Breast epithelium (tissue), 4 donors: ENCODE measurements at regions of chrX and their contacts with region 1.

Region 1: GRCh38 chrX:66050140-66050569 is 10.3 kb upstream of the VSIG4 start:
- DNase-seq: peak in 1 of 2 donors; percentile 20
- H3K4me3 ChIP-seq: no peak overlapping the region
- H3K27ac ChIP-seq: no peak overlapping the region
- H3K4me1 ChIP-seq: no peaks in the 10 kb centered on the region
- H3K27me3 ChIP-seq: peaks cover 0 to 31% of the 10 kb centered on the region in 2 donors
- CTCF ChIP-seq: no peak
- POLR2A ChIP-seq: no peak

Region 2: GRCh38 chrX:65451663-65452062 is 598.5 kb before region 1 on chrX:
- intact Hi-C with region 1: loop called (anchors 5 kb)
- DNase-seq: no peak
- H3K4me3 ChIP-seq: no peak overlapping the region
- H3K27ac ChIP-seq: no peak overlapping the region
- H3K4me1 ChIP-seq: no peaks in the 10 kb centered on the region
- H3K27me3 ChIP-seq: no peaks in the 10 kb centered on the region
- CTCF ChIP-seq: no peak
- POLR2A ChIP-seq: no peak